Ovary (tissue), 10 donors: ENCODE measurements at regions of chr22 and their contacts with region 1.

Region 1: GRCh38 chr22:22587577-22588188 is 28.6 kb upstream of the PRAME start:
- DNase-seq: no peak
- H3K4me3 ChIP-seq: no peak overlapping the region
- H3K27ac ChIP-seq: no peak overlapping the region
- H3K4me1 ChIP-seq: no peaks in the 10 kb centered on the region
- H3K27me3 ChIP-seq: no peaks in the 10 kb centered on the region
- CTCF ChIP-seq: no peak
- EP300 ChIP-seq: no peak
- POLR2A ChIP-seq: no peak

Region 2: DNA sequence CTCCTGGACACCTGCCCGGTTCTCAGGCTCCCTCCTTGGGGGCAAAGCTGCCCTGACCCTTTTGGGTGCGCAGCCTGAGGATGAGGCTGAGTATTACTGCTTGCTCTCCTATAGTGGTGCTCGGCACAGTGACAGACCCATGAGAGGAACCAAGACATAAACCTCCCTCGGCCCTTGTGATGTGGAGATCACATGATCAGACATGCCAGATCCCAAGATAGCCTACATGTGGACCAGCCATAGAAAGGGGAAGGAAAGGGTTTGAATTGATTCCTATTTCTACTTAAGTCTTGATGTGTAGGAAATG is 217.8 kb before region 1 on chr22:
- intact Hi-C with region 1: no loop called
- DNase-seq: no peak
- H3K4me3 ChIP-seq: no peak overlapping the region
- H3K27ac ChIP-seq: no peak overlapping the region
- H3K4me1 ChIP-seq: peaks cover 12% of the 10 kb centered on the region
- H3K27me3 ChIP-seq: no peaks in the 10 kb centered on the region
- CTCF ChIP-seq: no peak
- EP300 ChIP-seq: no peak
- POLR2A ChIP-seq: no peak

Region 3: DNA sequence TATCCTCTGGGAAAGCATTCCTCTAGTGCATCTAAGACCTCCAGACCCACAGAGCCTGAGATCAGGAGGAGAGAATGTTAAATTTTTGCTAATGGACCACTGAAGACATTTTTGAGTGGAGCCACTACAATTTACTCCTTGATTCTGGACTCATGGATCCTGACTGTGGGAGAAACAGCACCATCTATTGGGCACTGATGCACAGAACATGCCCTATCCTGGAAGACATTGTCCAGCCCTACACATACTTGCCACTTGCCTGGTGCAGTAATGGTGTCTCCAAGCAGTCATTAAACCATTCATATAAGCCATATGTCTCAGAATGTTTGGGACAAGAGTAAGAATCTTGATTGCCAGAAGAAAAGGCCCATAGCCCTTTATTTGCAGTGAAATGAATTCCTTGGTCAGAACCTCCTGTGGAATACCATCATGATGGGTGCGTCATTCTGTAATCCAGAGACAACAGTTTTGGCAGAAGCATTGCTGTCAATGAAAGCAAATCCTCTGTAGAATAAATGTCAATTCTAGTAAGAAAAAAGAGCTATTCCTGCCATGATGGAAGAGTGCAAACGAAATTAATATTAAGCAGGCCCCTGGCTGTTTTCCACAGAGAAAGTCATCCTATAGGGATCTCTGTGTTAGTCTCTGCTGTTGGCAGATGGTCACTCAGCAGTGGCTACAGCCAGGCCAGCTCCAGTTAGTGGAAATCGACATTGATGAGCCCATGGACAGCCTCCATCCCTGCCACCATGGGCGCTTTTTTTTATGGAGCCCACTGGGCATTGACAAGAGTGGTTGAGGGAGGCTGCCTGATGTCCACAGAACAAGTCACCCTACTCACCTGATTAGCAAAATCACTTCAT is 100.2 kb after region 1 on chr22:
- intact Hi-C with region 1: loop called in 1 of 4 experiments (anchors 10 kb)
- DNase-seq: peak in 3 of 5 donors; percentile 36 to 60 (median 47)
- H3K4me3 ChIP-seq: no peak overlapping the region
- H3K27ac ChIP-seq: no peak overlapping the region
- H3K4me1 ChIP-seq: peaks cover 6% of the 10 kb centered on the region
- H3K27me3 ChIP-seq: no peaks in the 10 kb centered on the region
- CTCF ChIP-seq: peak; percentile 14 to 66 (median 51)
- EP300 ChIP-seq: no peak
- POLR2A ChIP-seq: no peak

Region 4: GRCh38 chr22:22753526-22754267 is 166.0 kb after region 1 on chr22:
- intact Hi-C with region 1: loop called in 1 of 4 experiments (anchors 10 kb)
- DNase-seq: peak in 4 of 5 donors; percentile 19 to 55 (median 34)
- H3K4me3 ChIP-seq: no peak overlapping the region
- H3K27ac ChIP-seq: no peak overlapping the region
- H3K4me1 ChIP-seq: no peaks in the 10 kb centered on the region
- H3K27me3 ChIP-seq: no peaks in the 10 kb centered on the region
- CTCF ChIP-seq: no peak
- EP300 ChIP-seq: no peak
- POLR2A ChIP-seq: no peak